A673 (cell line): ENCODE measurements at regions of chr18 and their contacts with region 1.

Region 1: GRCh38 chr18:67705748-67706147 is 189.2 kb upstream of the DSEL start:
- DNase-seq: peak; percentile 31
- H3K4me3 ChIP-seq: no peak overlapping the region
- H3K27ac ChIP-seq: no peak overlapping the region
- H3K4me1 ChIP-seq: no peaks in the 10 kb centered on the region
- H3K27me3 ChIP-seq: no peaks in the 10 kb centered on the region
- CTCF ChIP-seq: peak; percentile 40; the same call in 1 of the 2 replicates

Region 2: GRCh38 chr18:66826211-66826610 is 879.5 kb before region 1 on chr18:
- CTCF ChIA-PET with region 1: no interaction called
- POLR2A ChIA-PET with region 1: no interaction called
- intact Hi-C with region 1: no loop called
- DNase-seq: peak; percentile 7
- H3K4me3 ChIP-seq: no peak overlapping the region
- H3K27ac ChIP-seq: no peak overlapping the region
- H3K4me1 ChIP-seq: no peaks in the 10 kb centered on the region
- H3K27me3 ChIP-seq: no peaks in the 10 kb centered on the region
- CTCF ChIP-seq: no peak

Region 3: DNA sequence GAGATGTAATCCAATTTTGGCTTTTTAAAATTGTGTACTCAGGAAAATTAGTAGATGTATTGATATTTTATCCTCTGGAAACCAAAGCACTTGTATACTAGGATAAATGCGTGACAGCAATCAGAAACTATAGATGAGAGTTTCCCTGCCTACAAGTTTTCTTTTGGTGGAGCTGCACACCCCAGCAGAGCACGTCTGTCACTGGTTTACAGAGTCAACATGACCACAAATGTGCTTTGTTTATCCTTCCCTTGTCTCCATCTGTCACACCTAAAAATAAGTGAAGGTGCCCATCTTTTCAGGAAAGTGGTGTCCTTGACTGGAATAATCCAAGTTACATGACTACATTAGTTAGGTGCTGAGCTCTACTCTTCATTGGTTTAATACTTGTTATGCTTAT is 21.1 kb after region 1 on chr18:
- CTCF ChIA-PET with region 1: no interaction called
- POLR2A ChIA-PET with region 1: no interaction called
- intact Hi-C with region 1: no loop called
- DNase-seq: no peak
- H3K4me3 ChIP-seq: no peak overlapping the region
- H3K27ac ChIP-seq: no peak overlapping the region
- H3K4me1 ChIP-seq: no peaks in the 10 kb centered on the region
- H3K27me3 ChIP-seq: no peaks in the 10 kb centered on the region
- CTCF ChIP-seq: no peak

Region 4: GRCh38 chr18:67776929-67777328 is 71.2 kb after region 1 on chr18:
- CTCF ChIA-PET with region 1: no interaction called
- POLR2A ChIA-PET with region 1: no interaction called
- intact Hi-C with region 1: loop called (anchors 2 kb)
- DNase-seq: peak; percentile 30
- H3K4me3 ChIP-seq: no peak overlapping the region
- H3K27ac ChIP-seq: no peak overlapping the region
- H3K4me1 ChIP-seq: peaks cover 13% of the 10 kb centered on the region
- H3K27me3 ChIP-seq: no peaks in the 10 kb centered on the region
- CTCF ChIP-seq: no peak